B cell (primary cell): ENCODE measurements at regions of chr20 and their contacts with region 1.

Region 1: DNA sequence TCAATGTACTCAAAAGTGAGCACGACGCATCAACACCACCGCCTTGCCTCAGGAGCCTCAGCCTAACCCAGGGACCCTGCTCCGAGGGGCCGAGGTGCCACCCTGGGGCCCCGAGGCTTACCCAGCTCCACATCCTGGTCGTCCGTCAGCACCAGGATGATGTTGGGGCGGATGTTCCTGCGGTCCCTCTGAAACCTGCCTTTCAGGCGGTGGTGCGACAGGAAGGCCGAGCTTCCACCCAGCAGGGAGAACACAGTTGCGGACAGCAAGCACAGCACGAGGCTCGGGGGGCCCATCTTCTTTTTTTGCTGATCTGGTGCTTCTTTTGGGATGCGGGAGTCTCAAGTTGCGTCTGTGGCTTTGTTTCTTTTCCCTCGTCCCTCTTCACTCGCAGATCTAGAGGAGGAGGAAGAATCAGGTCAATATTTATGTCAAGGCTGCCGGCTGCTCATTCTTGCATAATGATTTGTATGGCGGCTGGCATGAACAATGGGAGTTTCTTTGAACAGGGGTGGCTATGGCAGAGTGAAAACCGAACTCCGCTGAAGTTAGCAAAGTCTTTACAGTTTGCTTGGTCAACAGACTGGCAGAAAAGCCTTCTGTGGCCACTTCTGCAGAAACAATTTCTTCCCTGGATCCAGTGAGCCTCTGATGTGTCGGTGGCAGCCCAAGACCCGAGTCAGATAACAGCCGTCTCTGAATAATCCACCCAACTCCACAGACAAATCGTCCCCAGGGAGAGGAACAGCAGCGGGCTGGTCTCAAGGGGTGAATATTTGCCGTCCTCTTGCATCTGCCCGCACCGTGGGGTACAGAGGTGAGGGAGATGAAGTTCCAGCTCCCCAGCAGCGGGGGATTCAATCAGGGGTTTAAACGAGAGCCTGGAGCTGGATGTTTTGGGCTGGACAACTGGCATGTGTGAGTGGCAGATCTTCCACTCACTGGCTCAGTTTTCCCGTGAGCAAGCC is 27.9 kb downstream of the SULF2 start:
- DNase-seq: no peak
- ATAC-seq: no peak
- H3K4me3 ChIP-seq: no peak overlapping the region
- H3K4me3 Mint-ChIP-seq: no peak overlapping the region
- H3K27ac ChIP-seq: no peak overlapping the region
- H3K27ac Mint-ChIP-seq: no peak overlapping the region
- H3K4me1 ChIP-seq: no peaks in the 10 kb centered on the region
- H3K4me1 Mint-ChIP-seq: no peaks in the 10 kb centered on the region
- H3K27me3 ChIP-seq: peaks cover 0 to 13% (median 3%) of the 10 kb centered on the region in 4 experiments
- H3K27me3 Mint-ChIP-seq: peaks cover 41% of the 10 kb centered on the region
- CTCF ChIP-seq: no peak

Region 2: GRCh38 chr20:47735412-47736400 is 21.6 kb before region 1 on chr20:
- CTCF ChIA-PET with region 1: no interaction called
- POLR2A ChIA-PET with region 1: no interaction called
- intact Hi-C with region 1: no loop called
- DNase-seq: no peak
- ATAC-seq: no peak
- H3K4me3 ChIP-seq: no peak overlapping the region
- H3K4me3 Mint-ChIP-seq: no peak overlapping the region
- H3K27ac ChIP-seq: no peak overlapping the region
- H3K27ac Mint-ChIP-seq: no peak overlapping the region
- H3K4me1 ChIP-seq: peaks cover 4 to 15% of the 10 kb centered on the region in 2 donors
- H3K4me1 Mint-ChIP-seq: peaks cover 9% of the 10 kb centered on the region
- H3K27me3 ChIP-seq: no peaks in the 10 kb centered on the region
- H3K27me3 Mint-ChIP-seq: peaks cover under 1% of the 10 kb centered on the region
- CTCF ChIP-seq: no peak

Region 3: DNA sequence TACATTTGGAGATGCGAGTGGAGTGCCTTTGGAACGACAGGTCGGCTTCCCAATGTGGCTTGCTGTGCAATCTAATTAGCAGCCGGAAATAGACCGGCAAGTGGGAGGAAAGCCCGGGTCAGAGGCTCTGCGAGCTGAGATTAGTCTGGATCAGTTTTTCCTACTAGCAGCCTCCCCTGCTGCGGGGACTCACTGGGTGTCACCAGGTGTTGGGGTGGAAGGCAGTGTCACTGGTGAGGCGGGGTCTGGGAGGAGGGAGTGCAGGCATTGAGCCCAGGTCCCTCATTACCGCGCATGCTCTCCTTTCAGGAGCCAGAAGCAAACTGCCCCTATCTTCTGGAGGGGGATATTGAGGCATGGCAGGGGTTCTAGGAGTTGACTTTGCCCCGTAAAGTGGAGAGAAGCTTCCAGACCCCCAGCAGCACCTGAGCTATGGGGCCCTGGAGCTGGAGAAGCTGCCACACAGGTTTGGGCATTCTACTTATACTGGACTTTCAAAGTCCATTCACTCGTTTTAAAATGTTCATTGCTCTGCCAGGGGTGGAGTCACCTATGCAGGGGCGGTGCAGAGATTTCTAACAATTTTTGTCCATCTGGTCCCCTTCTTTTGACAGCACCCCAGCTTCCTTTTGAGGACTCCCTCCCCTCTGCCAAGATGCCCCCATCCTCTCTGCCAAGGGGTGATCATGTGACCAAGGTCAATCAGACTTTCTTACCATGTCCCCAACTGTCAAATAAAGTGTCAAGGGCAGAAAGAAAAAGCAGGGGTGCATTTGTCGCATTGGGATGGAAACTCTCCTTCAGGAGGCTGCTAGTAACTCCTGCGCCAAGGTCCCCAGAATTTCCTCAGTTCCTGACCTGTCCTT is 17.0 kb after region 1 on chr20:
- CTCF ChIA-PET with region 1: no interaction called
- POLR2A ChIA-PET with region 1: no interaction called
- intact Hi-C with region 1: no loop called
- DNase-seq: no peak
- ATAC-seq: no peak
- H3K4me3 ChIP-seq: no peak overlapping the region
- H3K4me3 Mint-ChIP-seq: no peak overlapping the region
- H3K27ac ChIP-seq: no peak overlapping the region
- H3K27ac Mint-ChIP-seq: no peak overlapping the region
- H3K4me1 ChIP-seq: no peaks in the 10 kb centered on the region
- H3K4me1 Mint-ChIP-seq: no peaks in the 10 kb centered on the region
- H3K27me3 ChIP-seq: peaks cover 0 to 8% (median 0%) of the 10 kb centered on the region in 4 experiments
- H3K27me3 Mint-ChIP-seq: peaks cover 13% of the 10 kb centered on the region
- CTCF ChIP-seq: no peak

Region 4: DNA sequence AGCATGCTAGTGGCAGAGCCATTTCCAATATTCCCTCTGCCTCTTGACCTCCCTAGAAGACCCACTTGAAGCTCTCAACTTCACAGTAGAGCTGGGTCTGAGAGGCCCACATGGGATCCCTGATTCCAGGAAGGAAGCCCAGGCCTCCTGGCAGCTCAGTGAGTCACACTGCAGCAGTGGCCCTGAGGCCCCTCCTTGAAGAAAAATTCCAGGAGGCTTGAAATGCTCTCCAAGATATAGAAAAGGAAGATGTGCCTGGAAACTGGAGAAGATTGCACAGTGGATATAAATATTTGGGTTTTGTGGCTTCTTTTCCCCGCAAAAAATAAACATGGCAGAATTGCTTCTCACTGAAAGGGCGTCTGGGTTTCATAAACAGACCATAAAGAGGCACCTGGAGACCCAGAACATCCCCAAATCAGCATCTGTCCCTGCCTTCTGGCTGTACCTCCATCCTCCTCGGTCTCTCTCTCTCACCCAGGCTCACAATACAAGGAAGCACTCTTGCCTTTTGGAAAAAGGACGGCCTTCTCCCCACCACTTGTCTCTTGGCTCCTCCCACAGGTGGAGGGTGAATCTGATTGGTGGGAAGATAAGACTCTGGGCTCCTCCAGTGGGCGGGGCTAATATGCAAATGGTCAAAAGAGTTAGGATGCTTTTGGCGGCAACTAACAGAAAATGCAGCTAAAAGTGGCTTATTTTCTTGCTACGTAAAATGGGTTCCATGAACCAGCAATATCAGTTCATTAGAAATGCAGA is 227.9 kb after region 1 on chr20:
- CTCF ChIA-PET with region 1: no interaction called
- POLR2A ChIA-PET with region 1: no interaction called
- intact Hi-C with region 1: no loop called
- DNase-seq: no peak
- ATAC-seq: no peak
- H3K4me3 ChIP-seq: no peak overlapping the region
- H3K4me3 Mint-ChIP-seq: no peak overlapping the region
- H3K27ac ChIP-seq: no peak overlapping the region
- H3K27ac Mint-ChIP-seq: no peak overlapping the region
- H3K4me1 ChIP-seq: peaks cover 12 to 18% of the 10 kb centered on the region in 2 donors
- H3K4me1 Mint-ChIP-seq: peaks cover 20% of the 10 kb centered on the region
- H3K27me3 ChIP-seq: no peaks in the 10 kb centered on the region
- H3K27me3 Mint-ChIP-seq: no peaks in the 10 kb centered on the region
- CTCF ChIP-seq: no peak

Region 5: GRCh38 chr20:48012197-48013085 is 255.1 kb after region 1 on chr20:
- CTCF ChIA-PET with region 1: no interaction called
- POLR2A ChIA-PET with region 1: interaction called, 12 read pairs
- intact Hi-C with region 1: no loop called
- DNase-seq: no peak
- ATAC-seq: no peak
- H3K4me3 ChIP-seq: no peak overlapping the region
- H3K4me3 Mint-ChIP-seq: no peak overlapping the region
- H3K27ac ChIP-seq: no peak overlapping the region
- H3K27ac Mint-ChIP-seq: no peak overlapping the region
- H3K4me1 ChIP-seq: peaks cover 0 to 3% of the 10 kb centered on the region in 2 donors
- H3K4me1 Mint-ChIP-seq: peaks cover 8% of the 10 kb centered on the region
- H3K27me3 ChIP-seq: peaks cover 0 to 4% (median 0%) of the 10 kb centered on the region in 4 experiments
- H3K27me3 Mint-ChIP-seq: peaks cover 12% of the 10 kb centered on the region
- CTCF ChIP-seq: no peak